Mammary epithelial cell (primary cell): ENCODE measurements at regions of chr1 and their contacts with region 1.

Region 1: GRCh38 chr1:177119311-177119710 is 45.2 kb downstream of the ASTN1 start:
- DNase-seq: no peak
- H3K4me3 ChIP-seq: no peak overlapping the region
- H3K27ac ChIP-seq: no peak overlapping the region
- H3K4me1 ChIP-seq: no peaks in the 10 kb centered on the region
- H3K27me3 ChIP-seq: peaks cover 7% of the 10 kb centered on the region
- CTCF ChIP-seq: no peak

Region 2: GRCh38 chr1:177133977-177134538 is 14.7 kb after region 1 on chr1:
- CTCF ChIA-PET with region 1: no interaction called
- dilution Hi-C with region 1: no loop called
- in situ Hi-C with region 1: no loop called
- intact Hi-C with region 1: loop called (anchors 2 kb)
- DNase-seq: no peak
- H3K4me3 ChIP-seq: no peak overlapping the region
- H3K27ac ChIP-seq: no peak overlapping the region
- H3K4me1 ChIP-seq: no peaks in the 10 kb centered on the region
- H3K27me3 ChIP-seq: no peaks in the 10 kb centered on the region
- CTCF ChIP-seq: no peak